CD4-positive, alpha-beta T cell (primary cell): ENCODE measurements at regions of chr16 and their contacts with region 1.

Region 1: GRCh38 chr16:2537453-2538379 is at the start of gene PDPK1:
- DNase-seq: peak; percentile 85 to 98 (median 92)
- ATAC-seq: peak; percentile 87
- H3K4me3 ChIP-seq: peak within 1 kb of the TSS; percentile 72
- H3K4me3 Mint-ChIP-seq: peak within 1 kb of the TSS; percentile 92
- H3K27ac ChIP-seq: peak within 1 kb of the TSS in 1 of 2 donors; percentile 68
- H3K27ac Mint-ChIP-seq: peak within 1 kb of the TSS; percentile 94
- H3K4me1 ChIP-seq: peaks cover 53% of the 10 kb centered on the region
- H3K4me1 Mint-ChIP-seq: peaks cover 37% of the 10 kb centered on the region
- H3K27me3 ChIP-seq: no peaks in the 10 kb centered on the region
- H3K27me3 Mint-ChIP-seq: peaks cover 3% of the 10 kb centered on the region
- CTCF ChIP-seq: no peak
- total RNA-seq, gene PDPK1: 46.1 to 51.1 TPM

Region 2: GRCh38 chr16:2047330-2048115 is 490.2 kb before region 1 on chr16 and contains the starts of genes NTHL1 and TSC2:
- CTCF ChIA-PET with region 1: no interaction called
- POLR2A ChIA-PET with region 1: no interaction called
- intact Hi-C with region 1: no loop called
- DNase-seq: peak; percentile 78 to 96 (median 90)
- ATAC-seq: peak; percentile 90
- H3K4me3 ChIP-seq: peak within 1 kb of the TSS; percentile 96
- H3K4me3 Mint-ChIP-seq: peak within 1 kb of the TSS; percentile 93
- H3K27ac ChIP-seq: peak within 1 kb of the TSS in 1 of 2 donors; percentile 29
- H3K27ac Mint-ChIP-seq: peak within 1 kb of the TSS; percentile 56
- H3K4me1 ChIP-seq: peaks cover 33% of the 10 kb centered on the region
- H3K4me1 Mint-ChIP-seq: peaks cover 23% of the 10 kb centered on the region
- H3K27me3 ChIP-seq: no peaks in the 10 kb centered on the region
- H3K27me3 Mint-ChIP-seq: no peaks in the 10 kb centered on the region
- CTCF ChIP-seq: peak; percentile 57
- total RNA-seq, gene NTHL1: 2.7 to 2.9 TPM
- total RNA-seq, gene TSC2: 83.0 to 85.0 TPM

Region 3: GRCh38 chr16:2492292-2492691 is 45.4 kb before region 1 on chr16:
- CTCF ChIA-PET with region 1: no interaction called
- POLR2A ChIA-PET with region 1: no interaction called
- intact Hi-C with region 1: no loop called
- DNase-seq: peak in 1 of 14 experiments; percentile 7
- ATAC-seq: no peak
- H3K4me3 ChIP-seq: no peak overlapping the region
- H3K4me3 Mint-ChIP-seq: no peak overlapping the region
- H3K27ac ChIP-seq: no peak overlapping the region
- H3K27ac Mint-ChIP-seq: no peak overlapping the region
- H3K4me1 ChIP-seq: peaks cover 7% of the 10 kb centered on the region
- H3K4me1 Mint-ChIP-seq: peaks cover 3% of the 10 kb centered on the region
- H3K27me3 ChIP-seq: no peaks in the 10 kb centered on the region
- H3K27me3 Mint-ChIP-seq: no peaks in the 10 kb centered on the region
- CTCF ChIP-seq: no peak

Region 4: GRCh38 chr16:3503523-3503922 is 965.8 kb after region 1 on chr16:
- CTCF ChIA-PET with region 1: no interaction called
- POLR2A ChIA-PET with region 1: no interaction called
- intact Hi-C with region 1: loop called in 1 of 2 experiments (anchors 5 kb)
- DNase-seq: peak; percentile 23 to 89 (median 62)
- ATAC-seq: peak; percentile 55
- H3K4me3 ChIP-seq: peak overlapping the region; percentile 25
- H3K4me3 Mint-ChIP-seq: peak overlapping the region; percentile 83
- H3K27ac ChIP-seq: peak overlapping the region; percentile 42 to 66
- H3K27ac Mint-ChIP-seq: peak overlapping the region; percentile 95
- H3K4me1 ChIP-seq: peaks cover 60% of the 10 kb centered on the region
- H3K4me1 Mint-ChIP-seq: peaks cover 72% of the 10 kb centered on the region
- H3K27me3 ChIP-seq: no peaks in the 10 kb centered on the region
- H3K27me3 Mint-ChIP-seq: no peaks in the 10 kb centered on the region
- CTCF ChIP-seq: no peak